ENCODE measurements at regions of chr3 and their contacts with region 1.

Region 1: GRCh38 chr3:38117748-38118420 is 19.0 kb downstream of the ACAA1 start:
- DNase-seq: peak; percentile 59 to 79 (median 73)
- ATAC-seq: peak; percentile 90
- H3K4me3 ChIP-seq: no peak overlapping the region
- H3K4me3 Mint-ChIP-seq: no peak overlapping the region
- H3K27ac ChIP-seq: no peak overlapping the region
- H3K27ac Mint-ChIP-seq: peak overlapping the region in 5 of 9 donors; percentile 22 to 84 (median 49)
- H3K4me1 ChIP-seq: no peaks in the 10 kb centered on the region
- H3K4me1 Mint-ChIP-seq: peaks cover 4 to 15% (median 7%) of the 10 kb centered on the region in 7 donors
- H3K27me3 ChIP-seq: no peaks in the 10 kb centered on the region
- H3K27me3 Mint-ChIP-seq: no peaks in the 10 kb centered on the region

Region 2: DNA sequence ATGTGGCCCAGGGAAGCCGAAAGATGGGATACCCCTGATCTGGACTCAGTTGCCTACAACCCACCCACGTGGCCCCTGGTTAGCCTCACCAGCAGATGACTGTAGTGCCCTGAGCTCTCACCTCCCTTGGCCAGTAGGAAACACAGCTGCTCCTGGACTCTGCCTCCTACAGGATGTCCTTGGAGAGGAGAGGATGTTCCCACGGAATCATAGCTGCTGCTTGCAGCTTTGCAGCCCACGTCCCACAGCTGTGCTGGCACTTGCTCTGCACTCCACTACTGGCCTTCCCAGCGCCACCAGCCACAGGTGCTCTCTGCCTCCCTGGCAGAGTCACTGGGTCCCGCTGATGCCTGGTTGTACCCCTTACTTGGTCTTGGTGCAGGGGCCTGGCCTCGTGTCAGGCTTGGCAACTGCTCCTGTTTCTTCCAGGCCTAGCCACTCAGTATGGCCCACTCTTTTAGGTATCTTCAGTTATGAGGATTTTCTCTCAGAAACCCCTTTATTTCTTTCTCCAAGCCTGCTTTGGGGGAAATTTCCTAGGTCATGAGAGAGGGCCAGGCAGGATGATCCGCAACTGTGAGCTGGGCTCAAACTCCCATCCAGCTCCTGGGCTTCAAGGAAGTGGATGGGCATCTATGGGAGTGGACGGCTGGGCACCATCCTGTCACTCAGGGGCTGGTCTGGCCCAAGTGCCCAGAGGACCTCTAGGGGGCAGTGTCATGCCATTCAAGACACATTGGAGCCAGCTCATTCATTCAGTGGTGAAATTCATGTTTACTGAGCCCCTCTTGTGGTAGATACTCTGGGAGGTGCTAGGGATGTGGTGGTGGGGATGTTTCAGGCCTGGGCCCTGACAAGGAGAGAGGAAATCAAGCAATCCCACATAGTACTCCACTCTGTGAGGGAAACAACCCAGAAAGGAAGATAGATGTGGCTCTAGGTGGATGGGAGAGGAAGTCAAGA is 143.5 kb before region 1 on chr3:
- CTCF ChIA-PET with region 1: interaction called, 4 read pairs
- POLR2A ChIA-PET with region 1: no interaction called
- intact Hi-C with region 1: loop called (anchors 1 to 5 kb)
- DNase-seq: peak; percentile 45 to 73 (median 66)
- ATAC-seq: peak; percentile 97
- H3K4me3 ChIP-seq: no peak overlapping the region
- H3K4me3 Mint-ChIP-seq: no peak overlapping the region
- H3K27ac ChIP-seq: no peak overlapping the region
- H3K27ac Mint-ChIP-seq: peak overlapping the region in 2 of 9 donors; percentile 14 to 48
- H3K4me1 ChIP-seq: no peaks in the 10 kb centered on the region
- H3K4me1 Mint-ChIP-seq: peaks cover 3 to 8% (median 5%) of the 10 kb centered on the region in 7 donors
- H3K27me3 ChIP-seq: no peaks in the 10 kb centered on the region
- H3K27me3 Mint-ChIP-seq: no peaks in the 10 kb centered on the region

Region 3: GRCh38 chr3:38221005-38221404 is 103.1 kb after region 1 on chr3:
- CTCF ChIA-PET with region 1: interaction called, 4 read pairs
- POLR2A ChIA-PET with region 1: no interaction called
- intact Hi-C with region 1: loop called in 1 of 2 experiments (anchors 1 kb)
- DNase-seq: no peak
- ATAC-seq: no peak
- H3K4me3 ChIP-seq: no peak overlapping the region
- H3K4me3 Mint-ChIP-seq: no peak overlapping the region
- H3K27ac ChIP-seq: no peak overlapping the region
- H3K27ac Mint-ChIP-seq: peak overlapping the region in 2 of 9 donors; percentile 6 to 83
- H3K4me1 ChIP-seq: no peaks in the 10 kb centered on the region
- H3K4me1 Mint-ChIP-seq: peaks cover 0 to 14% (median 5%) of the 10 kb centered on the region in 7 donors
- H3K27me3 ChIP-seq: no peaks in the 10 kb centered on the region
- H3K27me3 Mint-ChIP-seq: no peaks in the 10 kb centered on the region

Region 4: GRCh38 chr3:38297947-38298711 is 180.2 kb after region 1 on chr3:
- CTCF ChIA-PET with region 1: interaction called, 4 read pairs
- POLR2A ChIA-PET with region 1: interaction called, 3 read pairs
- intact Hi-C with region 1: loop called (anchors 1 kb)
- DNase-seq: no peak
- ATAC-seq: no peak
- H3K4me3 ChIP-seq: no peak overlapping the region
- H3K4me3 Mint-ChIP-seq: no peak overlapping the region
- H3K27ac ChIP-seq: no peak overlapping the region
- H3K27ac Mint-ChIP-seq: no peak overlapping the region
- H3K4me1 ChIP-seq: no peaks in the 10 kb centered on the region
- H3K4me1 Mint-ChIP-seq: no peaks in the 10 kb centered on the region
- H3K27me3 ChIP-seq: no peaks in the 10 kb centered on the region
- H3K27me3 Mint-ChIP-seq: peaks cover 0 to 19% (median 5%) of the 10 kb centered on the region in 5 donors

Region 5: DNA sequence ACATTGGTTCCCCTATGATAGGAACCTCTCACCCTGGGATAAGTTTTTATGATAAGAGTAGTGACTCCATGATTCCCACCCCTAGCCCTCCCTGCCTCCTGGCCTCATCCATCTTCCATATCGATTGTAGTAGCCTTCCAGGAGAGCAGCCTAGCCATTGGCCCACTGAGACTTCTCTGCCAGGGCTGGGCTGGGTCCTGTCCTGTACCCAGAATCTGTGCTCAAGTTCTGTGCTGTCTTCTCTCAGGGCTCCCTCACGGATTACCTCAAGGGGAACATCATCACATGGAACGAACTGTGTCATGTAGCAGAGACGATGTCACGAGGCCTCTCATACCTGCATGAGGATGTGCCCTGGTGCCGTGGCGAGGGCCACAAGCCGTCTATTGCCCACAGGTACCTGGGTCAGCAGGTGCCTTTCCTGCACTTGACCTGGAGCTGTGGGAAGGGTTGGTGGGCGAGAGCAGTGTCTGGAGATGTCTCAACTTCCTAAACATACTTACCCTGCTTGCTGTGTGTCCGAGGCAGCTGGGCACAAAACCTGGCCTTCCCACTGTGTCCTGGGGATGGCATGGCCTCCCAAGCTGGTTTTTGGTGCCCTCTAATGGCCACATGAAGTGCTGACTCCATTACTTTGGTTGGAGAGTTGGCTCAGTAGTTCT is 361.7 kb after region 1 on chr3:
- CTCF ChIA-PET with region 1: interaction called, 10 read pairs
- POLR2A ChIA-PET with region 1: no interaction called
- intact Hi-C with region 1: loop called (anchors 1 kb)
- DNase-seq: peak in 8 of 9 donors; percentile 30 to 63 (median 44)
- ATAC-seq: peak; percentile 79
- H3K4me3 ChIP-seq: no peak overlapping the region
- H3K4me3 Mint-ChIP-seq: no peak overlapping the region
- H3K27ac ChIP-seq: no peak overlapping the region
- H3K27ac Mint-ChIP-seq: peak overlapping the region in 4 of 9 donors; percentile 36 to 65 (median 50)
- H3K4me1 ChIP-seq: no peaks in the 10 kb centered on the region
- H3K4me1 Mint-ChIP-seq: peaks cover 0 to 6% (median 2%) of the 10 kb centered on the region in 7 donors
- H3K27me3 ChIP-seq: no peaks in the 10 kb centered on the region
- H3K27me3 Mint-ChIP-seq: no peaks in the 10 kb centered on the region

Measured in naive thymus-derived CD4-positive, alpha-beta T cell (primary cell).